ENCODE measurements at regions of chr12 and their contacts with region 1.

Region 1: DNA sequence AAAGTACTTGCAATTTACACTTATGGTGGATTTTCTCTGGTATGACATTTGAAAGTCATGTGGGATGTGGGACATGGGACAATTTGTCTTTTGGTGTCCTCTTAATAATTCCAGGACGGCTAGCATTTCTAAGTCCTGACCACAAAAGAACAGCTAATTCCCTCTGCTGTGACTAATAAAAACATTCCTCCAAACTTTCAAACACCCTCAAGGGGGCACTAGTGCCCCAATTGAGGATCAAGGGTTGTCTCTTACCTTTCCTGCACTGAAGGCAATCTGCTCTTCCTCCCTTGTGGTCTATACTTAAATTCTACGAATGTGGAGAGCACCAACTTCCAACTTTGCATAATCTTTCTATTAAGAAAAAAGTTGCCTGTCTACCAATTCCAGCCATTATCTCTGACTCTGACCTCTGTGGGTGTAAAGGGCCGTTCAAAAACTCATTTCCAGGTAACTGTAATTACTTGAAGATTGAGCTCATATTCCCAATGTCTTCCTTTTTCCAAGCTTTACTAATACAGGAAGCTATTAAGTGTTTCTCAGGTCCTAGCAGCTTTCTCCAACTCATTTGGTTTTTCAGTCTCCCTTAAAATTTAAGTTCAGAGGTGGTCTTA is 210.2 kb downstream of the PTPRO start:
- DNase-seq: peak; percentile 9 to 76 (median 52)
- ATAC-seq: peak; percentile 72 to 86
- H3K4me3 Mint-ChIP-seq: peak overlapping the region in 6 of 10 donors; percentile 7 to 70 (median 22)
- H3K27ac Mint-ChIP-seq: peak overlapping the region in 7 of 10 donors; percentile 37 to 90 (median 73)
- H3K4me1 Mint-ChIP-seq: peaks cover 0 to 18% (median 6%) of the 10 kb centered on the region in 4 donors
- H3K27me3 Mint-ChIP-seq: peaks cover 0 to 3% (median 0%) of the 10 kb centered on the region in 5 donors

Region 2: GRCh38 chr12:15584366-15585041 is 52.0 kb after region 1 on chr12:
- POLR2A ChIA-PET with region 1: interaction called, 16 read pairs
- DNase-seq: peak in 7 of 10 donors; percentile 8 to 72 (median 28)
- ATAC-seq: peak; percentile 52 to 53
- H3K4me3 Mint-ChIP-seq: no peak overlapping the region
- H3K27ac Mint-ChIP-seq: no peak overlapping the region
- H3K4me1 Mint-ChIP-seq: peaks cover 2 to 8% (median 6%) of the 10 kb centered on the region in 4 donors
- H3K27me3 Mint-ChIP-seq: no peaks in the 10 kb centered on the region

Measured in naive thymus-derived CD8-positive, alpha-beta T cell (primary cell).